Endothelial cell of umbilical vein (primary cell): ENCODE measurements at regions of chr14 and their contacts with region 1.

Region 1: GRCh38 chr14:89954070-89955028 is at the start of gene EFCAB11:
- DNase-seq: peak; percentile 100
- H3K4me3 ChIP-seq: peak within 1 kb of the TSS; percentile 39 to 73 (median 70)
- H3K27ac ChIP-seq: peak within 1 kb of the TSS; percentile 86
- H3K4me1 ChIP-seq: peaks cover 35% of the 10 kb centered on the region
- H3K27me3 ChIP-seq: no peaks in the 10 kb centered on the region
- CTCF ChIP-seq: peak; percentile 20 to 23
- POLR2A ChIP-seq: peak; percentile 87
- total RNA-seq, gene EFCAB11: 6.3 and 11.2 TPM in 2 replicates

Region 2: DNA sequence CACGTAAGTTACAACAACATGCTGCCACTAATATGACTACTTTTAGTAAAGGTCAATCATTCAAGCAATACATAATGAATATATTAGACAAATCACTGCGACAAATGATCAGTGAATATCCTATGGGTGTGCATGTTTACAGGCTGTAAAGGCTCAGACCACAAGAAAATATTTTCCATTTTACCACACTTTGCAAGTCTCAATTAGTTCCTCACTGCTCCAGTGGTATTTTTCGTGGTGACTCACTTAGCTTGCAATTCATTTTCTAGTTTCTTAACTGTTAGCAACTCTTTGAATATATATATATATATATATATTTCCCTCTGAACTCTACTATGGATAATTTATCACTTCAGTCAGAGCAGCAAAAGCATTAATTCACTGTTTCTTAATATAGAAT is 1258.5 kb before region 1 on chr14:
- CTCF ChIA-PET with region 1: no interaction called
- POLR2A ChIA-PET with region 1: no interaction called
- dilution Hi-C with region 1: no loop called
- intact Hi-C with region 1: no loop called
- DNase-seq: no peak
- H3K4me3 ChIP-seq: no peak overlapping the region
- H3K27ac ChIP-seq: no peak overlapping the region
- H3K4me1 ChIP-seq: no peaks in the 10 kb centered on the region
- H3K27me3 ChIP-seq: peaks cover 0 to 3% of the 10 kb centered on the region in 2 experiments
- CTCF ChIP-seq: no peak
- POLR2A ChIP-seq: no peak

Region 3: GRCh38 chr14:88824314-88825077 is 1129.9 kb before region 1 on chr14 and contains the start of gene TTC8:
- CTCF ChIA-PET with region 1: no interaction called
- POLR2A ChIA-PET with region 1: no interaction called
- dilution Hi-C with region 1: no loop called
- intact Hi-C with region 1: loop called (anchors 1 kb)
- DNase-seq: peak; percentile 92
- H3K4me3 ChIP-seq: peak within 1 kb of the TSS; percentile 22 to 82 (median 70)
- H3K27ac ChIP-seq: peak within 1 kb of the TSS; percentile 88
- H3K4me1 ChIP-seq: peaks cover 6% of the 10 kb centered on the region
- H3K27me3 ChIP-seq: peaks cover 3 to 8% of the 10 kb centered on the region in 2 experiments
- CTCF ChIP-seq: no peak
- POLR2A ChIP-seq: peak; percentile 96
- total RNA-seq, gene TTC8: 11.9 and 15.5 TPM in 2 replicates

Region 4: DNA sequence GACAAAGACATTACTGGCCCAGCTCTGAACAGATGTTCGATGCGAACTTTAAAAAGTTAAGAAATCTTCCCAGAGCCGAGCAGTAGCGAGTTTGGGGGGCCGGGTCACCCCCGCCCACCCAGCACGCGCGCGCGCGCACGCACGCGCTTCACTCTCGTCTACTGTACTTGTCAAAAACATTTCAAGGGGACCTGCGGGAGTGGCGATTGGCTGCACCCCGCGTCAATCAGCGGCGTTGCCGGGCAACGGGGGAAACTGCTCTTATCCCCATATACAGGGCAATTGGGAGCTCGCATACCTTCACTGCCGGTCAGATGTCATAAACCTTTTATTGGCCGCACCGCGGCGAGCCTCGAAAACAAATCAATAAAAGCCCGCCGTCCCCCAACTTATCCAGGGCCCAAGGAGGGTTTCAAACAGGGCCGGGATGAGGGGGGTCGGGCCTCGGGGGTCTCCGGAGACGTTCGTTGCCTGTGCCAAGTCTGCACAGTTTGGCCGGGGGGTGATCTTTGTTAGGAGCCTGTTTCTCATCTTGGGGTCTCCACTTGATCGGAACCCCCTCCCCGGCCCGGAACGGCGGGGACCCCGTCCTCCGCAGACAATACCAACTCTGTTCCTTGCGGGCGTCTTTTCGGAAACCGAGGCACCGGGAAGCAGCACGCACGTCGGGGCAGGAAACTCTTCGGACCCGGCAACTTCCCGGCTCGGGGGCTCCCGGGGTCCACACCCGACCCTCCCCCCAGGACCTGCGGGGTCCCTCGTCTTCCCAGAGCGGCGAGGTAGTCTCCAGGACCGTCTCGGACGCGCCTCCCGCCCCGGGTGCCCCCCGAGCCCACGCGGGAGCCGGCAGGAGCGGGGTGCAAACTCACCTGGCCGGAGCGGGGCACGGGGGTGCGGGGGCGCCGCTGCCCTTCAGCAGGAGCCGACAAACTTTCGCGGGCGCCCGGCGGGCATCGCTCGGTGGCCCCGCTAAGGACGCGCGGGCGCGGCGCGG is 538.0 kb before region 1 on chr14:
- CTCF ChIA-PET with region 1: no interaction called
- POLR2A ChIA-PET with region 1: no interaction called
- dilution Hi-C with region 1: no loop called
- intact Hi-C with region 1: loop called (anchors 2 kb)
- DNase-seq: peak; percentile 99
- H3K4me3 ChIP-seq: peak overlapping the region; percentile 55 to 78 (median 68)
- H3K27ac ChIP-seq: peak overlapping the region; percentile 65
- H3K4me1 ChIP-seq: peaks cover 6% of the 10 kb centered on the region
- H3K27me3 ChIP-seq: no peaks in the 10 kb centered on the region
- CTCF ChIP-seq: no peak
- POLR2A ChIP-seq: no peak

Region 5: GRCh38 chr14:89773644-89774316 is 180.6 kb before region 1 on chr14:
- CTCF ChIA-PET with region 1: no interaction called
- POLR2A ChIA-PET with region 1: no interaction called
- dilution Hi-C with region 1: no loop called
- intact Hi-C with region 1: no loop called
- DNase-seq: peak; percentile 12
- H3K4me3 ChIP-seq: no peak overlapping the region
- H3K27ac ChIP-seq: no peak overlapping the region
- H3K4me1 ChIP-seq: peaks cover 34% of the 10 kb centered on the region
- H3K27me3 ChIP-seq: no peaks in the 10 kb centered on the region
- CTCF ChIP-seq: no peak
- POLR2A ChIP-seq: no peak

Region 6: DNA sequence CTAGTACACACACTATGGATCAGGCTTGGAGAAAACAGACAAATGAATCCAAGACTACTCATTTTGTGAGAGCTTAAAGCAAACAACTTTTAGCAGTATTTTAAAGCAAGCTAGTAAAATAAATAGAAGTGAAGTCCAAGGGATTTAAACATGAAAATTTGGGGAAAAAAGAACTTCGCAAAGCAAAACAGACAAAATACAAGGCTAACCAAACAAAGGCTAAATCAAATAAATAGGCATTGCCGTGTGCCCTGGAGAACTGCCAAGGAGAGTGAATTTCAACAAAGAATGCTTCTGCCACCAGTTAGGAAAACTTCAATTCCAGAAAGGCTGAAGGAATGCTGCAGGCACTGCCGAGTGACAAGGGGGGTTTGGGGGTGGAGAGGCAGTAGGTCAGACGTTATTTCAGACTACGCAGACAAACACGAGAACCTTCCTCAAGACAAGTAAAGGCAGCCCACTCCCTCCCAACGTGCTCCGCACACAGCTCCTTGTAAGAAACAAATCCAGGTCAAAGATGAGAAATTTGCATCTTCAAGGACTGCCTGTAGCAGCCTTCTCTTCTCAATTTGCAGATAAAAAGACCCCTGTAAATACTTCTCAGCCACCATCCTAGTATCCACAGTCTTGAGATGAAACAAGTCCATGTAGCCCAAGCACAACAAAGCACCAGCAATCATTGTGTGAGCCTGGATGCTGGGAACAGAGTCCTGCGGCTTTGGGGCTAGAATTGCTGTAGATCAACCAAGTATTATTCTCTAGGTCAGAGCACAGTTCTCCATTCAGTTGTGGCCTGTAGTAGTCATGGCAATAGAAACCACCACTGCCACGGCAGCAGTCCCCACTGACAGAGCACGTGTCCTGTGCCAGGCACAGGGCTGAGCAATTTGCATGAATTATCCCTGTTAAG is 43.1 kb before region 1 on chr14:
- CTCF ChIA-PET with region 1: no interaction called
- POLR2A ChIA-PET with region 1: no interaction called
- dilution Hi-C with region 1: no loop called
- intact Hi-C with region 1: no loop called
- DNase-seq: peak; percentile 49
- H3K4me3 ChIP-seq: no peak overlapping the region
- H3K27ac ChIP-seq: no peak overlapping the region
- H3K4me1 ChIP-seq: no peaks in the 10 kb centered on the region
- H3K27me3 ChIP-seq: no peaks in the 10 kb centered on the region
- CTCF ChIP-seq: no peak
- POLR2A ChIP-seq: no peak

Region 7: DNA sequence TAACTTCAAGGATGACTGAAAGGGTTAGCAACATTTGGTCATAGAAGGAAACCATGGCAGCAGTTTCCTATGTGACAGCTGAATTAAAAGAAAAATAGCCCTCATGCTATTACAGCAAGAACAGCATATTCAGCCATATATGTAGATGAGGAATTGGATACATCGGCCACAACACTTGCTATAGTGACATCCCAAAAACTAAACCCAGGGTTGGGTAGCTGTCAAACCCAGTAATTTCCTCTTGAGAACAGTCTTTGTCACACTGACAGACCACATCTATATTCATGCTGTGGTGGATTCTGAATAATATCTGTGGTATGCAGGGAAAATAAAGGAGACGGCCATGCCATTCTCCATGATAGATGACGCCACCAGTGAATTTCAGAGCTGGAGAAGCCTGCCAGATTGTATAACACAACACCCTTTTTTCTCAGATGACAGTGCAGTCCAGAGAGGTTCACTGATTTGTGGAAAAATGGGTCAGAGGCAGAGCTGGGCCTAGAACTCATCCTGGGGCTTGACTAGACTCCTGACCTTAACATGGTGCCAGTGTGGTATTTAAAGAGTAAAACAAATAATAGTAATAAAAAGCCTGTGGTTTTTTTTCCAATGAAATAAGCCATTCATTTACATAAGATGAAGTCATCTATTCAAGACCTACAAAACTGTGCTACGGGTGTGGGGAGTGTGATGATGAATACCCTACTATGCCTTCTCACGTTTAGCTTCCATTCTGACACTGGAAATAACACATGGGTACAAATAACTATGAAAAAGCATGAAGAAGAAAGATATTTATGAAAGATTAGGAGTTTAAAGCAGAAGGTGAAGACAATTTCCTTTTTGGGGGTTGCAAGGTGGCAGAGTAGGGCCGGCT is 32.1 kb before region 1 on chr14:
- CTCF ChIA-PET with region 1: interaction called, 6 read pairs
- POLR2A ChIA-PET with region 1: no interaction called
- dilution Hi-C with region 1: no loop called
- intact Hi-C with region 1: loop called (anchors 1 kb)
- DNase-seq: no peak
- H3K4me3 ChIP-seq: no peak overlapping the region
- H3K27ac ChIP-seq: peak overlapping the region; percentile 49
- H3K4me1 ChIP-seq: peaks cover 23% of the 10 kb centered on the region
- H3K27me3 ChIP-seq: no peaks in the 10 kb centered on the region
- CTCF ChIP-seq: no peak
- POLR2A ChIP-seq: no peak

Region 8: DNA sequence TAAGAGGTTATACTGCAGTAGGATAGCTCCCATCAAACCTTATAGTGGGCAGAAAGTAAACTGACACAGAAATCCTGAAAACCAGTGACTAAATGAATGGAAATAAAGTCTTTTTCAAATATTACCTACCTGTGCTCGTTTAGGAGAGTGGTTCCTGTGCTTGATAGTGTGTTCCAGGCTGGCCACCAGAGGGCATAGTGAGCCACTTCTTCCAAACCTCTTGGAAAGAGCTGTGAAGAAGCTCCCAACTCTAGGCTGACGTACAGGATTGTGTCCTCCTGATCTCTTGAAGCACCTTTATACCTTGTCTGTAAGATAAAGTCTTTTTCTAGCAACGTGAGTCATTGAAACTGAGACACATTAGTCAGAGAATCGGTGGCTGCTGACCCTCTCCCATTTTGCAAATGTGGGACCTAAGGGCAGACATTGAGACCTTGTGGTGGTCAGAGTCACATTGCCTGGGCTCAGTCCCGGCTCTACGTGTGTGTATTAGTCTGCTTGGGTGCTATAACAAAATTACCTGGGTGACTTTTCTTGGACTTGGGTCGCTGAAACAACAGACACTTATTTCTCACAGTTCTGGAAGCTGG is 19.0 kb after region 1 on chr14:
- CTCF ChIA-PET with region 1: interaction called, 90 read pairs
- POLR2A ChIA-PET with region 1: no interaction called
- dilution Hi-C with region 1: no loop called
- intact Hi-C with region 1: no loop called
- DNase-seq: peak; percentile 67
- H3K4me3 ChIP-seq: no peak overlapping the region
- H3K27ac ChIP-seq: no peak overlapping the region
- H3K4me1 ChIP-seq: no peaks in the 10 kb centered on the region
- H3K27me3 ChIP-seq: no peaks in the 10 kb centered on the region
- CTCF ChIP-seq: peak; percentile 79 to 83
- POLR2A ChIP-seq: no peak

Region 9: DNA sequence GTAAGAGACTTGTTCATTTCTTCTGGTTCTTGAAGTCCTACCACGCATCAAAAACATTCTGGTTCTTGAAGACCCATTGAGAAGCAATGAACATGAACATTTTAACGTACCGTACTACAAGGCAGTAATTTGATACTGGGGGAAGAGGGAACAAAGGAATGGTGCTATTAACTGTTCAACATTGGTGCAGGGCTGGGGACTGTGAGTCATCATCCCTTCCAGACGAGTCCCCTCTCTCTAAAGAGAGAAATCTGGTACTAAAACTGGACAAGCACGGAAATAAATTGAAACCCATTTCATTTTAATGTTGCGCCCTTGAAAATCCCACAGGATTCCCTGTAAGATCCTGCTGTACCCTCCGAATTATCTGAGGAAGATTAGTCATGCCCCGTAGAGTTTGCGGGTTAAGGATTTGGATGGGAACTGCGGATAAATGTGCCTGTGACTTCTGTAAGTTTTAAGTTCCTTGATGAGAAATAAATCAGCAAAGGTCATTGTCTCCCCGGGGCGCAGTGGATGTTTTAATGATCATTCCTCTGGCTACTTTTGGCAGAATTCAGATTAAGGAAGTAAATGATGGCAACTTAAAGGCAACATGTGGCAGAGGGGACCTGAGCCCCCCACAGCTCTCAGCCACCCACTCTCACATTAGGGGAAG is 186.1 kb after region 1 on chr14:
- CTCF ChIA-PET with region 1: no interaction called
- POLR2A ChIA-PET with region 1: no interaction called
- dilution Hi-C with region 1: no loop called
- intact Hi-C with region 1: loop called (anchors 5 kb)
- DNase-seq: peak; percentile 62
- H3K4me3 ChIP-seq: no peak overlapping the region
- H3K27ac ChIP-seq: peak overlapping the region; percentile 93
- H3K4me1 ChIP-seq: peaks cover 34% of the 10 kb centered on the region
- H3K27me3 ChIP-seq: peaks cover 2 to 5% of the 10 kb centered on the region in 2 experiments
- CTCF ChIP-seq: no peak
- POLR2A ChIP-seq: no peak

Region 10: DNA sequence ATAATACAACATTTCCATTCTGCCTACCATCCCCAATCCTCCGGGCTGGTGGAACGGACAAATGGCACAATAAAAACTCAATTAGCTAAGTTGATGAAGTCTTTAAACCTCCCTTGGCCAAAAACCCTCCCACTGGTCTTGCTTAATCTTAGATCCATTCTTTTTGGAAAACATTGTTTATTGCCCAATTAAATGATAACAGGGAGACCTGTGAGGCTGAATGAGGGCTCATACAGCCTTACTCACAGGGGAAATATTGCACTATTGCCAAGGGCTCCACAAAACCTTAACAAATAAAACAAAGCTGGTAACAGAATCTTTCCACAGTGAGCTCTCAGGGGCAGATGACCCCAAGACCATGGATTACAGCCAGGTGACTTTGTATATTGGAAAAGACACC is 294.2 kb after region 1 on chr14:
- CTCF ChIA-PET with region 1: no interaction called
- POLR2A ChIA-PET with region 1: no interaction called
- dilution Hi-C with region 1: no loop called
- intact Hi-C with region 1: no loop called
- DNase-seq: no peak
- H3K4me3 ChIP-seq: no peak overlapping the region
- H3K27ac ChIP-seq: no peak overlapping the region
- H3K4me1 ChIP-seq: no peaks in the 10 kb centered on the region
- H3K27me3 ChIP-seq: peaks cover 1 to 2% of the 10 kb centered on the region in 2 experiments
- CTCF ChIP-seq: no peak
- POLR2A ChIP-seq: no peak

Region 11: DNA sequence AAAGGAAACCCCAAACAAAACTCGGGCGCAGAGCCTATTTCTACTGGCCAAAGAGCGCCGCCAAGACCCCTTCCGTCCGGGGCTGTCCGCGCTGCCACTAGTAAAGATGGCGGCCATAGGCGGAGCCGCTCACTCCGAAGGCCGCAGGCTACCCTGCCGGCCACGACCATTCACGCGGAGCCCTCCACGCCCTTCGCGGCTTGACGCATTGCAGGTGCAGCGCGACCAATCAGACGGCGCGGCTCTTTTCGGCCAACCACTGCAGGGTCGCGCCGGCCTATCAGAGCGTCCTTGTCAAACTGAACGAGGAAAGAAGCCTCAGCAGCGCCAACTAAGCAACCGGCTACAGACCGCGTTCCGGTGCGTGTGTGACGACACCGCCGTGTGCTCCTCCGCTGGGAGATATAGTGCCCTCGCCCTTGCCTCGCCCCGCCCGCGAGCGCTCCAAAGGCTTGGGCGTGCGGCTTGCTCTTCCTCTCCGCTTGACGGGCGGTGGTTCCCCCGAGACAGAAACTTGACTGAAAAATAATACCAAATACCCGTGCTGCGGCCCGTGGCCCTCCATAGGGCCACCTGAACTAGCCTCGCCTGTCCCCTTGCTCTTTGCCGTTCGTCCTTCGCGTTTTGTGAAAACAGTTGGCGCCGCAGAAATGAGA is 428.9 kb after region 1 on chr14:
- CTCF ChIA-PET with region 1: no interaction called
- POLR2A ChIA-PET with region 1: no interaction called
- dilution Hi-C with region 1: no loop called
- intact Hi-C with region 1: loop called (anchors 2 kb)
- DNase-seq: peak; percentile 100
- H3K4me3 ChIP-seq: peak overlapping the region; percentile 47 to 70 (median 58)
- H3K27ac ChIP-seq: peak overlapping the region; percentile 97
- H3K4me1 ChIP-seq: peaks cover 17% of the 10 kb centered on the region
- H3K27me3 ChIP-seq: peaks cover 0 to 2% of the 10 kb centered on the region in 2 experiments
- CTCF ChIP-seq: no peak
- POLR2A ChIP-seq: peak; percentile 77